ENCODE measurements at regions of chr5 and their contacts with region 1.

Region 1: DNA sequence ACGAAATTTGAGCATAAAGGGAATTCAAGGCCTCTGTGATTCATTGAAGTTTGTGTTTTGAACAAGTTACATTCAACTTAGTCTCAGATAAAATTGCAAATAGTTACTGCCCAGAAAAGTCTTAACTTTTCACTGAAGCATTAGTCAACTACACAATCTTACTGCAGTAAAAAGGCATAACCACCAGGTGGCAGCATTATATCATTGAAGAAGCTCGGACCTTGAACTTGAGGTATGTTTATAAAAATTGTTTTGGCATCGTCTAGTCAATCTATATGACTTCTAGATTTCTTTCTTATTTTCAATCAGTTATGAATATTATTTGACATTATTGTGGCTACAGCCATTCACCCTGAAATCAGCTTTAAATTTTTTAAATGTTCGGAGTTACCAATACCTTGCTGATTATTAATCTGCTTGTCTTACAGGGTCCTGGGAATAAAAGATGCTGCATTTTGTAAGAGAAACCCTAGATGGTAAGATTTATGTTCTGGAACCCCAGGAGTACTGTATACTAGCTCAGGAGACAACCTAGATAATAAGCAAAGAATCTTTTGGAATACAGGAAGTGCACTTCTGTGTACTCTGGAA is 83.9 kb upstream of the GRAMD2B start:
- DNase-seq: peak; percentile 23 to 67 (median 52)
- H3K4me3 ChIP-seq: no peak overlapping the region
- H3K27ac ChIP-seq: no peak overlapping the region
- H3K4me1 ChIP-seq: peaks cover 0 to 7% of the 10 kb centered on the region in 2 donors
- H3K27me3 ChIP-seq: no peaks in the 10 kb centered on the region
- CTCF ChIP-seq: peak; percentile 76 to 92 (median 86)
- POLR2A ChIP-seq: no peak

Region 2: DNA sequence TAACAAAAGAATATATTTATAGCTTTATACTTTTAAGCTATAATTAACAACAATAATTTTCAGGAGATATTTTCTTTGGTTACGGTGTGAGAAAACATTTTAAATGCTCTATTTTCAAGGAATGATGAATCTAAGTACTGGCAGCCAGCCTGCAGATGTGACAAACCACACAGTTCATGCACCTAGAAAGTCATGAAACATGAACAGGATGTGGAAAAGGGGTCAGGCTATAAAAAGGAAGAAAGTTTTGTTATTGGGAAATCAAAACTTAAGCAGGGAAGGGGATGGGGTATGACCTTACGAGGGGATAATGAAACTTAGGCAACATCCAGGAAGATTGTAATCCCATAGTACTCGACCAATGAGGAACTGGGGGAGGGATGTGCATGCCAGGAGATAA is 424.8 kb before region 1 on chr5:
- intact Hi-C with region 1: no loop called
- DNase-seq: no peak
- H3K4me3 ChIP-seq: no peak overlapping the region
- H3K27ac ChIP-seq: no peak overlapping the region
- H3K4me1 ChIP-seq: no peaks in the 10 kb centered on the region
- H3K27me3 ChIP-seq: no peaks in the 10 kb centered on the region
- CTCF ChIP-seq: no peak
- POLR2A ChIP-seq: no peak

Region 3: DNA sequence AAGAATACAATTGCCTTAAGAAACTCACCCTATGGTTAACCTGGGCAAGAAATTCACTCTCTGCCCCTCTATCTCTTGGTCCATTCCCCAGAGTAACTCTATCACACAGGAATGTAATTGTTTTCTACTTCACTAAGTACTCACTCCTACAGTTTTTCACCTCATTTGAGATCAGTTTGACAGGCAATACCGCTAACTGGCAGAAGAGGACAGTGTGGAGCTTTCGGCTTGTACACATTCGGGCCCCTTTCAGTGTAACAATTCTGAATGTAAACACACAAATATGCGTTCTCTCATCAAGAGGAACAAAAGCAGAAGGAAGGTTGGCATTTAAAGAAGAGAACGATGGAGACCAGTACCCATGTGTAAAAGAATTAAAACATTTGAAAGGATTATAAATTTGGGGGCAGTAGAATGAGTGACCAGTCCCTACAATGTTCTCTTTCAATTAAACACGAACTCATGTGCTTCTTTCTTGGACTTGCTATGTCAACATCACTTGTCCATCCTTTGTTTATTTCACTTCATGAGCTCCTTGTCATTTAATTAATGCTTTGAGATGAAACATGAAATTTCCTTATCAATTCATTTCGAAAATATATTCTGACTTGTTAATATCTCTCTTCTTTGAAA is 104.6 kb before region 1 on chr5:
- intact Hi-C with region 1: no loop called
- DNase-seq: no peak
- H3K4me3 ChIP-seq: no peak overlapping the region
- H3K27ac ChIP-seq: no peak overlapping the region
- H3K4me1 ChIP-seq: no peaks in the 10 kb centered on the region
- H3K27me3 ChIP-seq: no peaks in the 10 kb centered on the region
- CTCF ChIP-seq: peak in 4 of 6 experiments; percentile 22 to 33 (median 30)
- POLR2A ChIP-seq: no peak

Region 4: GRCh38 chr5:126536874-126537273 is 197.6 kb after region 1 on chr5:
- intact Hi-C with region 1: loop called in 1 of 2 experiments (anchors 5 kb)
- DNase-seq: no peak
- H3K4me3 ChIP-seq: no peak overlapping the region
- H3K27ac ChIP-seq: peak overlapping the region in 1 of 5 donors; percentile 1
- H3K4me1 ChIP-seq: peaks cover 0 to 13% of the 10 kb centered on the region in 2 donors
- H3K27me3 ChIP-seq: no peaks in the 10 kb centered on the region
- CTCF ChIP-seq: peak in 5 of 6 experiments; percentile 13 to 40 (median 34)
- POLR2A ChIP-seq: no peak

Measured in adrenal gland (tissue), 19 donors.